Naive thymus-derived CD4-positive, alpha-beta T cell (primary cell): ENCODE measurements at regions of chr4 and their contacts with region 1.

Region 1: GRCh38 chr4:122758033-122758432 is 25.5 kb downstream of the BBS12 start:
- DNase-seq: peak in 5 of 9 donors; percentile 16 to 31 (median 21)
- ATAC-seq: peak; percentile 57
- H3K4me3 ChIP-seq: no peak overlapping the region
- H3K4me3 Mint-ChIP-seq: no peak overlapping the region
- H3K27ac ChIP-seq: no peak overlapping the region
- H3K27ac Mint-ChIP-seq: no peak overlapping the region
- H3K4me1 ChIP-seq: peaks cover 0 to 9% of the 10 kb centered on the region in 2 donors
- H3K4me1 Mint-ChIP-seq: peaks cover 0 to 24% (median 12%) of the 10 kb centered on the region in 7 donors
- H3K27me3 ChIP-seq: peaks cover 0 to 3% of the 10 kb centered on the region in 2 donors
- H3K27me3 Mint-ChIP-seq: peaks cover 0 to 24% (median 18%) of the 10 kb centered on the region in 5 donors

Region 2: GRCh38 chr4:122689972-122690371 is 68.1 kb before region 1 on chr4:
- CTCF ChIA-PET with region 1: no interaction called
- POLR2A ChIA-PET with region 1: no interaction called
- intact Hi-C with region 1: no loop called
- DNase-seq: peak in 1 of 9 donors; percentile 48
- ATAC-seq: no peak
- H3K4me3 ChIP-seq: no peak overlapping the region
- H3K4me3 Mint-ChIP-seq: peak overlapping the region in 1 of 10 donors; percentile 19
- H3K27ac ChIP-seq: no peak overlapping the region
- H3K27ac Mint-ChIP-seq: peak overlapping the region in 1 of 9 donors; percentile 67
- H3K4me1 ChIP-seq: no peaks in the 10 kb centered on the region
- H3K4me1 Mint-ChIP-seq: peaks cover 0 to 59% (median 4%) of the 10 kb centered on the region in 7 donors
- H3K27me3 ChIP-seq: no peaks in the 10 kb centered on the region
- H3K27me3 Mint-ChIP-seq: peaks cover 0 to 7% (median 0%) of the 10 kb centered on the region in 5 donors

Region 3: GRCh38 chr4:122827879-122828601 is 70.0 kb after region 1 on chr4:
- CTCF ChIA-PET with region 1: interaction called, 3 read pairs
- POLR2A ChIA-PET with region 1: no interaction called
- intact Hi-C with region 1: loop called in 1 of 2 experiments (anchors 2 kb)
- DNase-seq: peak in 7 of 9 donors; percentile 9 to 40 (median 27)
- ATAC-seq: peak; percentile 81
- H3K4me3 ChIP-seq: peak overlapping the region; percentile 44
- H3K4me3 Mint-ChIP-seq: peak overlapping the region; percentile 74 to 86 (median 84)
- H3K27ac ChIP-seq: no peak overlapping the region
- H3K27ac Mint-ChIP-seq: peak overlapping the region in 1 of 9 donors; percentile 27
- H3K4me1 ChIP-seq: peaks cover 5 to 8% of the 10 kb centered on the region in 2 donors
- H3K4me1 Mint-ChIP-seq: peaks cover 7 to 22% (median 11%) of the 10 kb centered on the region in 7 donors
- H3K27me3 ChIP-seq: peaks cover 10 to 16% of the 10 kb centered on the region in 2 donors
- H3K27me3 Mint-ChIP-seq: peaks cover 71 to 81% (median 80%) of the 10 kb centered on the region in 5 donors

Region 4: DNA sequence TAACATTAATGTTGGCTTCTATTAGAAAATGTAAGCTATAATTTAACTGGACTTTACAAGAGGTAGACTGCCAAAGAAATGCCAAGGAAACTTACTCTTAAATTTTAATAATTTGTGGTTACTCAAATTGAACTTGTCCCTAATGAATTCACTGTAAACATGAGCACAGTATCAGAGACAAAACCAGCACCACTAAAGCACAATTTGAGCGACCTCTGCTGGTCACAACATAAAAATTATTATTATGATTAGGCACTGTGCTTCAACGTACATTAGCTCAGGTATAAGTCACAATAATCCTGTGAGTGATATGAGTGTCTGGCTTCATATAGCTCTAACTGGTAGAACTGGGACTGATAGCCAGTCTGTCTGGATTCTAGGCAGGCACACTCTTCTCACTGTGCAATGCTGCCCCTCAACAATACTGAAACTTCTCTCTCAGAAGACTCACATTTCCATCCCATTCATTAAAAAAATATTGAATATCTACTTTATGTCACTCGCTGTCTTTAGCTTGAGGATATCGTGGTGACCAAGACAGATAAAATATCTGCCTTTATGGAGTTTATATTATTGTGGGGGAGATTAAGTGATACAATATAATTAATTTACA is 156.4 kb after region 1 on chr4:
- CTCF ChIA-PET with region 1: interaction called, 3 read pairs
- POLR2A ChIA-PET with region 1: no interaction called
- intact Hi-C with region 1: loop called in 1 of 2 experiments (anchors 1 kb)
- DNase-seq: peak in 3 of 9 donors; percentile 11 to 46 (median 12)
- ATAC-seq: peak; percentile 78
- H3K4me3 ChIP-seq: no peak overlapping the region
- H3K4me3 Mint-ChIP-seq: no peak overlapping the region
- H3K27ac ChIP-seq: no peak overlapping the region
- H3K27ac Mint-ChIP-seq: no peak overlapping the region
- H3K4me1 ChIP-seq: no peaks in the 10 kb centered on the region
- H3K4me1 Mint-ChIP-seq: peaks cover 0 to 5% (median 0%) of the 10 kb centered on the region in 7 donors
- H3K27me3 ChIP-seq: no peaks in the 10 kb centered on the region
- H3K27me3 Mint-ChIP-seq: no peaks in the 10 kb centered on the region

Region 5: GRCh38 chr4:122930862-122931261 is 172.8 kb after region 1 on chr4:
- CTCF ChIA-PET with region 1: interaction called, 19 read pairs
- POLR2A ChIA-PET with region 1: interaction called, 3 read pairs
- intact Hi-C with region 1: loop called (anchors 1 kb)
- DNase-seq: peak in 3 of 9 donors; percentile 6 to 17 (median 14)
- ATAC-seq: no peak
- H3K4me3 ChIP-seq: no peak overlapping the region
- H3K4me3 Mint-ChIP-seq: no peak overlapping the region
- H3K27ac ChIP-seq: no peak overlapping the region
- H3K27ac Mint-ChIP-seq: no peak overlapping the region
- H3K4me1 ChIP-seq: no peaks in the 10 kb centered on the region
- H3K4me1 Mint-ChIP-seq: peaks cover 0 to 36% (median 7%) of the 10 kb centered on the region in 7 donors
- H3K27me3 ChIP-seq: no peaks in the 10 kb centered on the region
- H3K27me3 Mint-ChIP-seq: no peaks in the 10 kb centered on the region

Region 6: DNA sequence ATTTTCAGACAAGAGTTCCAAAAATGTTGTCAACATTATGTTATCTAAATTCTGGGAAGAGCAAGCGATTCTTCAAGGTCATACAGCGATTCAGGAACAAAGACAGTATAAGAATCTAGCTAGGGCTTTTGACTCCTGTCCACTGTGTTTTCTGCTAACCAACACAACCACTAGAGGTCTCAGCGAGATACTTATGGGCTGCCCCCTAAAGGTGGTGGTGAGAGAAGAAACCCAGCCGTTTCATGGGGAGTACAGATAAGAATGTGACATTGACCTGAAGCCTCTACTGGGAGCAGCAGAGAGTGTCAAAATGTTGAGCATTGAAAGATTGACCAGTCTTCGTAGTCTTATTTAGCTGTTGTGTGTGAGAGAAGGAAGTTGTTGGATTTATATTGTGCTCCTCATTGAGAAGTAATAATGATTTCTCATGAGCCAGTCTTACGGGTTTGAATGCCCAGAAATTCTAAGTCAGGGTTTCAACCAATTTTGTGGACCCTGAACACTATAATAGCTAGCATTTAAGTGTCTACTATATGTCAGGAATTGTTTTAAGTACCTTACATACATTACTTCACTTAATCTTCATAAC is 806.8 kb after region 1 on chr4:
- CTCF ChIA-PET with region 1: no interaction called
- POLR2A ChIA-PET with region 1: no interaction called
- intact Hi-C with region 1: loop called in 1 of 2 experiments (anchors 5 kb)
- DNase-seq: peak in 8 of 9 donors; percentile 1 to 55 (median 26)
- ATAC-seq: peak; percentile 98
- H3K4me3 ChIP-seq: no peak overlapping the region
- H3K4me3 Mint-ChIP-seq: no peak overlapping the region
- H3K27ac ChIP-seq: no peak overlapping the region
- H3K27ac Mint-ChIP-seq: no peak overlapping the region
- H3K4me1 ChIP-seq: no peaks in the 10 kb centered on the region
- H3K4me1 Mint-ChIP-seq: peaks cover 0 to 6% (median 0%) of the 10 kb centered on the region in 7 donors
- H3K27me3 ChIP-seq: no peaks in the 10 kb centered on the region
- H3K27me3 Mint-ChIP-seq: peaks cover 8 to 25% (median 16%) of the 10 kb centered on the region in 5 donors

Region 7: GRCh38 chr4:123661080-123661737 is 903.2 kb after region 1 on chr4:
- CTCF ChIA-PET with region 1: no interaction called
- POLR2A ChIA-PET with region 1: no interaction called
- intact Hi-C with region 1: loop called in 1 of 2 experiments (anchors 5 kb)
- DNase-seq: peak in 3 of 9 donors; percentile 3 to 6 (median 4)
- ATAC-seq: no peak
- H3K4me3 ChIP-seq: no peak overlapping the region
- H3K4me3 Mint-ChIP-seq: no peak overlapping the region
- H3K27ac ChIP-seq: no peak overlapping the region
- H3K27ac Mint-ChIP-seq: no peak overlapping the region
- H3K4me1 ChIP-seq: no peaks in the 10 kb centered on the region
- H3K4me1 Mint-ChIP-seq: peaks cover 0 to 7% (median 0%) of the 10 kb centered on the region in 7 donors
- H3K27me3 ChIP-seq: no peaks in the 10 kb centered on the region
- H3K27me3 Mint-ChIP-seq: peaks cover 3 to 31% (median 5%) of the 10 kb centered on the region in 5 donors